ENCODE measurements at regions of chr1 and their contacts with region 1.

Region 1: DNA sequence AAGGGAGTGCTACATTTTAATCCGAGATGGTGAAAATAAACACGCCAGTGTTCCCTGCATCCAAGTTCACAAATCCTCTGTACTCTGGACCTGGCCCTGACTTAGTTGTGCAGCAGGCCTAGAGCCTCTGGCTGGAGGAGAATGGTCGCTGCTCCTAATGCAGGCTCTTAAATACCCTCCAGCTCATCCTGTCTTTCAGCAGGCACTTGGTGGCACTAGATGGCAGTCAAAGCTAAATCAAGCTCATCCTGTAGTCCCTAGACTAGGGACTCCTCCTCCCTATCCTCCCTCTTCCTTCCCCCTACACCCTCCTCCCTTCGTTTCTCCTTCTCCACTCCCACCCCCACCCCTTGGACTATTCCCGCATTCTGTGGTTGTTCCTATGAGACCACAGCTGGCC is 41.6 kb upstream of the MTR start:
- DNase-seq: peak; percentile 63
- ATAC-seq: peak; percentile 97
- H3K4me3 ChIP-seq: no peak overlapping the region
- H3K27ac ChIP-seq: no peak overlapping the region
- H3K4me1 ChIP-seq: peaks cover 16% of the 10 kb centered on the region
- H3K27me3 ChIP-seq: peaks cover 0 to 6% of the 10 kb centered on the region in 2 experiments; a peak in 1 of 5 replicates
- CTCF ChIP-seq: peak; percentile 86
- EP300 ChIP-seq: no peak
- POLR2A ChIP-seq: no peak
- RAD21 ChIP-seq: peak; percentile 67; the same call in 1 of the 2 replicates

Region 2: GRCh38 chr1:236716160-236716559 is 37.4 kb before region 1 on chr1:
- CTCF ChIA-PET with region 1: no interaction called
- POLR2A ChIA-PET with region 1: no interaction called
- in situ Hi-C with region 1: no loop called
- intact Hi-C with region 1: no loop called
- DNase-seq: no peak
- ATAC-seq: no peak
- H3K4me3 ChIP-seq: no peak overlapping the region
- H3K27ac ChIP-seq: no peak overlapping the region
- H3K4me1 ChIP-seq: no peaks in the 10 kb centered on the region
- H3K27me3 ChIP-seq: peaks cover 0 to 4% of the 10 kb centered on the region in 2 experiments; a peak in 1 of 5 replicates
- CTCF ChIP-seq: no peak
- EP300 ChIP-seq: no peak
- POLR2A ChIP-seq: no peak
- RAD21 ChIP-seq: no peak

Region 3: GRCh38 chr1:236767276-236767675 is 13.8 kb after region 1 on chr1:
- CTCF ChIA-PET with region 1: no interaction called
- POLR2A ChIA-PET with region 1: no interaction called
- in situ Hi-C with region 1: no loop called
- intact Hi-C with region 1: no loop called
- DNase-seq: no peak
- ATAC-seq: no peak
- H3K4me3 ChIP-seq: no peak overlapping the region
- H3K27ac ChIP-seq: no peak overlapping the region
- H3K4me1 ChIP-seq: peaks cover 11% of the 10 kb centered on the region
- H3K27me3 ChIP-seq: peaks cover 0 to 14% of the 10 kb centered on the region in 2 experiments; a peak in 2 of 5 replicates
- CTCF ChIP-seq: no peak
- EP300 ChIP-seq: no peak
- POLR2A ChIP-seq: no peak
- RAD21 ChIP-seq: no peak

Region 4: DNA sequence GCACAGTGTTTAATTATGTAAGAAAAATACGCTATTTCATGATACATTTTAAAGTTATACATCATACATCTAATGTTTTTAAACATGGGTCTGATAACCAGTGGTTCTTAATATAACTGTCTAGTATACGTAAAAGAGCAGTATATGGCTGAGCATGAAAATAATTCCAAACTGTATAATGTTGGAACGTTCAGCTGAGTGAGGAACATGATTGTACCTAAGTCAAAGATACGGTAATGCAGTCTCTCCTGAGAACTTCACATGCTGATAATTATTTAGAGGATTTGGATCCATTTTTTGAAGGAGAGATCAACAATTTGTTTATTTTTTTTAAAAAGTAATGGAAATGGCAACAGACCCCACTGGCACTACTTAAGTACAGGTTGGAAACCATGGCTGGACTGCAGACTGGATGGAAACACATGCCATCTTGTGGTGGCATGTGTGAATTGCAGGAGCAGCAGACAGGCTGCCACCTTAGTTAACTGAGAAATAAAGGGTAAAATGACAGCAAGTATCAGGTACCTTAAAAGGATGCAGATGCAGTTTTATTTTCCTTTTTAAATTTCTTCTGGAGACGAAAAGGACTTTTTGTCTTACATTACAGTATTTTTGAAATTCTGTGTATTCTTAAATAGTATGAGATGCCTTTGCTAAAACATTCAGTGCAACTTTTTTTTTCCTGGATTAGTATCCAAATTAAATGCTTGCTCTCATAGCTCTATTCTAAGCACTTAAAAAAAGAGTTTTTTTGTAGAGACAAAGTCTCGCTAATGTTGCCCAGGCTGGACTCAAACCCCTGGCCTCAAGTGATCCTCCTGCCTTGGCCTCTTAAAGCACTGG is 115.3 kb after region 1 on chr1:
- CTCF ChIA-PET with region 1: interaction called, 24 read pairs
- POLR2A ChIA-PET with region 1: no interaction called
- in situ Hi-C with region 1: loop called (anchors 5 kb)
- intact Hi-C with region 1: loop called (anchors 2 kb)
- DNase-seq: peak; percentile 60
- ATAC-seq: peak; percentile 93
- H3K4me3 ChIP-seq: no peak overlapping the region
- H3K27ac ChIP-seq: no peak overlapping the region
- H3K4me1 ChIP-seq: peaks cover 5% of the 10 kb centered on the region; the same call in 1 of the 2 replicates
- H3K27me3 ChIP-seq: no peaks in the 10 kb centered on the region
- CTCF ChIP-seq: peak; percentile 88
- EP300 ChIP-seq: no peak
- POLR2A ChIP-seq: no peak
- RAD21 ChIP-seq: peak; percentile 82

Region 5: DNA sequence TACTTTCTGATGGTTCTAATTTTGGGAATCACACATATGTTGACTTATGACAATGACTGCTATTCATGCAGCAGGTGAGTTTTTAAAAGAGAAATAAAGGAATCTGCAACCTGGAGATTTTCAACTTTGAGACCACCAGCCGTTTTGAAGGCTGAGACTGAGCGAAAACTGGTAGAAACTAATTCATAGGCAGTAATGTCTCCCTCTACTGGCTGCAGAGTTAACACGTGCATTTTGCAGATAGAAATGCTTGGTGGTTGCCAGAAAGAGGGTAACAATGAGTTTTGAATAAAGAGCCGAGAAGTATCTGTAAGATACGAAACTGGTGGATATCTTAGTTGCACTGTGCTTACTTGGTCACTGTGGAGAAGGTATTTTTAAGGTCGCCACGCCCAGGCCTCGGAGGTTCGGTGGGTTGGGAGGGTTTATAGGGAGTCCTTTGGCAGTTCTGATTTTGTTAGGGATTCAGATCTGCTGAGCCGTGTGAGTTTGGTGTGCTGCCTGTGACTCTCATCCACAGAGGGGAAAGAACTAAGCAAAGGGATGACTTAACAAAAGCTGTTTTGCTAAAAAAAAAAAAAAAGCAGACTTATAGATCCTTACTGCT is 371.4 kb after region 1 on chr1:
- CTCF ChIA-PET with region 1: interaction called, 7 read pairs
- POLR2A ChIA-PET with region 1: no interaction called
- in situ Hi-C with region 1: loop called (anchors 25 kb)
- intact Hi-C with region 1: loop called (anchors 2 kb)
- DNase-seq: peak; percentile 13
- ATAC-seq: peak; percentile 72
- H3K4me3 ChIP-seq: no peak overlapping the region
- H3K27ac ChIP-seq: no peak overlapping the region
- H3K4me1 ChIP-seq: no peaks in the 10 kb centered on the region
- H3K27me3 ChIP-seq: no peaks in the 10 kb centered on the region; a peak in 1 of 5 replicates
- CTCF ChIP-seq: peak; percentile 72
- EP300 ChIP-seq: no peak
- POLR2A ChIP-seq: no peak
- RAD21 ChIP-seq: no peak

Region 6: GRCh38 chr1:237763137-237763536 is 1009.6 kb after region 1 on chr1:
- CTCF ChIA-PET with region 1: no interaction called
- POLR2A ChIA-PET with region 1: no interaction called
- in situ Hi-C with region 1: no loop called
- intact Hi-C with region 1: no loop called
- DNase-seq: no peak
- ATAC-seq: no peak
- H3K4me3 ChIP-seq: no peak overlapping the region
- H3K27ac ChIP-seq: no peak overlapping the region
- H3K4me1 ChIP-seq: no peaks in the 10 kb centered on the region
- H3K27me3 ChIP-seq: no peaks in the 10 kb centered on the region
- CTCF ChIP-seq: no peak
- EP300 ChIP-seq: no peak
- POLR2A ChIP-seq: no peak
- RAD21 ChIP-seq: no peak